ENCODE measurements at regions of chr15 and their contacts with region 1.

Region 1: GRCh38 chr15:74842581-74843444 is at the start of gene ULK3:
- DNase-seq: peak; percentile 91
- H3K4me3 Mint-ChIP-seq: peak within 1 kb of the TSS; percentile 92
- H3K27ac Mint-ChIP-seq: peak within 1 kb of the TSS; percentile 98
- H3K4me1 Mint-ChIP-seq: peaks cover 52% of the 10 kb centered on the region
- H3K27me3 Mint-ChIP-seq: no peaks in the 10 kb centered on the region
- total RNA-seq, gene ULK3: 52.1 and 52.4 TPM in 2 replicates

Region 2: DNA sequence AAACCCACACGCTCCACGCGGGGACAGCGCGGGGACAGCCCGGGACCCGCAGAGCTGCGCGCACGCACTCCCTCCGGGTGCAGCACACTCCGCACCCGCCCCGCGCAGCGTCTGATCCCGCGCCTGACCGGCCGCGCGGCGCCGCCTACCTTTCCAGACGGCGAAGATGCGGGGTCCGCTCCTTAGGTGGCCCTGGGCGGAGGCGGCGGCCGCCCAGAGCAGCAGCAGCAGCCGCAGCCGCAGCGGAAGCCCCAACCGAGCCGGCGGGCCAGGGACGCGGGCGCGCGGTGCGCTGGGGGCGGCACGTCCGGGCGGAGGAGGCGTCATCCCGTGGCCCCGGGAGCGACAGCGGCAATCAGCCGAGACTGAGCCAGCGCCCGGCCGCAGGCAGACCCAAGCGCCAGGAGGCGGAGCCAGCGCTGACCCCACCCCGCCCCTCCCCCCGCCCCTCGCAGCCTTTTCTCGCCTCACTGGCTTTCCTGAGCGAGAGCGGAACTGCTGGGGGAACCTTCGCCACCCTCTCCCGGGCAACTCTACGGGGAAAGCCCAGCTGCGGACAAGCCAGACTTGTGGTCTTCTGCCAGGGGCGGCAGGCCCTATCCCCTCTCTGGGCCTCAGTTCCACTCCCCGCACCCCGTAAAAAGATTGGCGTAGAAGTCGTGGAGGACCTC is 409.1 kb before region 1 on chr15 and contains the start of gene SEMA7A:
- intact Hi-C with region 1: no loop called
- DNase-seq: peak; percentile 82
- H3K4me3 Mint-ChIP-seq: peak within 1 kb of the TSS; percentile 97
- H3K27ac Mint-ChIP-seq: peak within 1 kb of the TSS; percentile 87
- H3K4me1 Mint-ChIP-seq: peaks cover 79% of the 10 kb centered on the region
- H3K27me3 Mint-ChIP-seq: no peaks in the 10 kb centered on the region
- total RNA-seq, gene SEMA7A: 102 TPM in 2 replicates

Region 3: GRCh38 chr15:74620636-74621545 is 221.9 kb before region 1 on chr15:
- intact Hi-C with region 1: no loop called
- DNase-seq: peak; percentile 71
- H3K4me3 Mint-ChIP-seq: no peak overlapping the region
- H3K27ac Mint-ChIP-seq: peak overlapping the region; percentile 77
- H3K4me1 Mint-ChIP-seq: peaks cover 40% of the 10 kb centered on the region
- H3K27me3 Mint-ChIP-seq: no peaks in the 10 kb centered on the region

Region 4: DNA sequence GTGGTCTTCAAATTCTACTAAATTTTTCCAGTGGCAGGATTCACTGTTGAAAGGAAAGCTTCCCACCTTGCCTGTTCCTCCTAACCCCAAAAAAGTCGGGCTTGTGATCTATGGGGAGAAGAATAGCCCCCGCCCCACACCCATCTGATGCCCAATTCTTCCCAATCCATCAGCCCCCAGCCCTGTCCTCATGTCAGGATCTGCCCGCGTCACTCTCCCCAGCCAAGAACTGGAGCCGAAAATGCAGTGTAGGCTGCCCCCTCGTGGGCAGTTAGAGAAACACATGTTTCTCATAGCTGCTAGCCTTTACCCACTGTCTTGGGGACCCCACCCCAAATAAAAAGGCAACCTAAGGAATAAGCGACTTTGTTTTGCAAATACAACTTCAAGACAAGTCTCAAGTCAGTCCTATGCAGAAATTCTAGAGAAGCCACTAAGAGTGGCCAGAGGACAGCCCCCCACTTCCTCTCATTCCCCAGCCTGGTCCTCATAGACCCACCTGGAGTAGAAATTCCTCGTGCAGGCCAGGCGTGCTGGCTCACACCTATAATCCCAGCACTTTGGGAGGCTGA is 74.0 kb before region 1 on chr15:
- intact Hi-C with region 1: loop called (anchors 2 kb)
- DNase-seq: no peak
- H3K4me3 Mint-ChIP-seq: no peak overlapping the region
- H3K27ac Mint-ChIP-seq: no peak overlapping the region
- H3K4me1 Mint-ChIP-seq: peaks cover 34% of the 10 kb centered on the region
- H3K27me3 Mint-ChIP-seq: peaks cover 11% of the 10 kb centered on the region

Region 5: DNA sequence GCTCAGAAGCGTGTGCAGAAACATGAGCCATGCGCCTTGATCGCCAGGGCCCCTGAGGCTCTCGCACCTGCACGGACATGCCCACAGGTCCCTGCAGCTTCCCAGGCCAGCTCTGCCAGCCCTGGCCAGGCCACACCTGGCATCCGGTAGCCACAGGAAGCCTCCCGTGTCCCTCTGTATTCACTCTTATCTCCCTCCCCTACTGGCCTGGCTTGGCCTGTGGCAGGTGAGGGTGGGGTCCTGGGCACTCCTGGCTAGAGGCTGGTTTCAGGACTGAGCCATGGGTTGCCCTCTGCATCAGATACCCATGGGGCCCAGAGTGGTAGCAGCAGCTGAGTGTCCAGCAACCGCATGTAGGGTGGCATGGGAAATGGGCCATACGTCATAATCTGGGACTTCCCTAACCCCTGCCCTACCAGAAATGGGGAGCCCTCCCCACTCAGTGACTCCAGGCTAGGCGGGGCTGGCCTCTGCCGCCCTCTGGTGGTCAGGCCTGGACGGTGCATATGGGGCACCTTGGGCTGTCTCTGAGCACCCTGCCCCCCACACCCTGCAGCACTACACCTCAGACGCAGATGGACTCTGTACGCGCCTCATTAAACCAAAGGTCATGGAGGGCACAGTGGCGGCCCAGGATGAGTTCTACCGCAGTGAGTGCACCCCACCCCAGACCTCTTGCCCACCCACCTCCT is 42.8 kb before region 1 on chr15:
- intact Hi-C with region 1: loop called (anchors 2 kb)
- DNase-seq: peak; percentile 82
- H3K4me3 Mint-ChIP-seq: peak overlapping the region; percentile 45
- H3K27ac Mint-ChIP-seq: peak overlapping the region; percentile 81
- H3K4me1 Mint-ChIP-seq: peaks cover 37% of the 10 kb centered on the region
- H3K27me3 Mint-ChIP-seq: no peaks in the 10 kb centered on the region

Region 6: GRCh38 chr15:74873036-74873755 is 30.4 kb after region 1 on chr15 and contains the start of gene SCAMP2:
- intact Hi-C with region 1: loop called (anchors 1 kb)
- DNase-seq: peak; percentile 86
- H3K4me3 Mint-ChIP-seq: peak within 1 kb of the TSS; percentile 97
- H3K27ac Mint-ChIP-seq: peak within 1 kb of the TSS; percentile 86
- H3K4me1 Mint-ChIP-seq: peaks cover 34% of the 10 kb centered on the region
- H3K27me3 Mint-ChIP-seq: peaks cover 4% of the 10 kb centered on the region
- total RNA-seq, gene SCAMP2: 93.7 and 103 TPM in 2 replicates

Region 7: GRCh38 chr15:74906446-74907162 is 63.8 kb after region 1 on chr15 and contains the start of gene FAM219B:
- intact Hi-C with region 1: loop called (anchors 1 kb)
- DNase-seq: peak; percentile 81
- H3K4me3 Mint-ChIP-seq: peak within 1 kb of the TSS; percentile 92
- H3K27ac Mint-ChIP-seq: peak within 1 kb of the TSS; percentile 87
- H3K4me1 Mint-ChIP-seq: peaks cover 44% of the 10 kb centered on the region
- H3K27me3 Mint-ChIP-seq: no peaks in the 10 kb centered on the region
- total RNA-seq, gene FAM219B: 72.6 and 73.2 TPM in 2 replicates

Region 8: DNA sequence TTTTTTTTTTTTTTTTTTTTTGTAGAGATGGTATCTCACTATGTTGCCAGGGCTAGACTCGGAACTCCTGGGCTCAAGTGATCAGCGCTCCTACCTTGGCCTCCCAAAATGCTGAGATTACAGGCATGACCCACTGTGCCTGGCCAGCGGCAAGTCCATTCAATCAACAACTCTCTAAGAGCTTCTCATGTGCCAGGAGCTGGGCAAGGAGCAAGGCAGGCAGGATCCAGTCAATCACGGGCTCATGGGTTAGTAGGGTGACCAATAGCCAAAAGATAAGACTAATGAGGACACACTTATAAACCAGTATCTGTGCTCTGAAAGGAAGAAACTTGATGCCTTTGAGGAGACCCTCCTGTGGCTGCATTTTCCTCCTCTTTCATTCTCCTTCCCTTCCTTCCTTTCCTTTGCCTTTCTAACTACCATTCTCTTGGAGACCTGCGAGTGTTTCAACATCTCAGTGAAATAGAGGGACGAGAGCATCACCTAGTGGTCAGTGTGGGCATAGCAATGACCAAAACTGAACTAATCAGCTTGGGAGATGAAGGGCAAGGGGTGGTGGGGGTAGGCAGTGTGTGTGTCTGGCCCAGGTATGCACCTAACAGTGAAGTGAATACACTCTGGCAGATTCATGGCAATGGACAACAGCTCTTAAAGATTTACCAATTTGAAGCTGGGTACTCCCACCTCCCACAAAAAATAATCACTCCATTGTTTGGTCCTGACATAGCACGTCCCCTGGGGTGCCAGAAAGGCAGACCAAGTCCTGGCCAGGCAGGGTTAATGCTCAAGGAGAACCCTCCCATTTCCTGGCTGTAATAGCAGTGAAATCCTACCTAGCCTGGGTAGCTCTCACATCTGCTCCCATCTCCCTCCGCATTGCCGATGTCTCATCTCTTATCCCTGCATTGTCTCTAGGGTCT is 107.5 kb after region 1 on chr15:
- intact Hi-C with region 1: loop called (anchors 1 kb)
- DNase-seq: peak; percentile 71
- H3K4me3 Mint-ChIP-seq: no peak overlapping the region
- H3K27ac Mint-ChIP-seq: no peak overlapping the region
- H3K4me1 Mint-ChIP-seq: peaks cover 11% of the 10 kb centered on the region
- H3K27me3 Mint-ChIP-seq: peaks cover 2% of the 10 kb centered on the region

Measured in activated T-helper 1 cell treated with anti-CD3 and anti-CD28 coated beads, Interleukin-12 subunit alpha, Interleukin-12 subunit beta, Interleukin-2, Interleukin-4 antibody, amounts not matched to agents 30 ng/mL and 10 ng/mL and 1 ng/mL, durations not matched to agents 14 hours and 24 hours and 36 hours (primary cell).